Endothelial cell of umbilical vein (primary cell): ENCODE measurements at regions of chr1 and their contacts with region 1.

Region 1: DNA sequence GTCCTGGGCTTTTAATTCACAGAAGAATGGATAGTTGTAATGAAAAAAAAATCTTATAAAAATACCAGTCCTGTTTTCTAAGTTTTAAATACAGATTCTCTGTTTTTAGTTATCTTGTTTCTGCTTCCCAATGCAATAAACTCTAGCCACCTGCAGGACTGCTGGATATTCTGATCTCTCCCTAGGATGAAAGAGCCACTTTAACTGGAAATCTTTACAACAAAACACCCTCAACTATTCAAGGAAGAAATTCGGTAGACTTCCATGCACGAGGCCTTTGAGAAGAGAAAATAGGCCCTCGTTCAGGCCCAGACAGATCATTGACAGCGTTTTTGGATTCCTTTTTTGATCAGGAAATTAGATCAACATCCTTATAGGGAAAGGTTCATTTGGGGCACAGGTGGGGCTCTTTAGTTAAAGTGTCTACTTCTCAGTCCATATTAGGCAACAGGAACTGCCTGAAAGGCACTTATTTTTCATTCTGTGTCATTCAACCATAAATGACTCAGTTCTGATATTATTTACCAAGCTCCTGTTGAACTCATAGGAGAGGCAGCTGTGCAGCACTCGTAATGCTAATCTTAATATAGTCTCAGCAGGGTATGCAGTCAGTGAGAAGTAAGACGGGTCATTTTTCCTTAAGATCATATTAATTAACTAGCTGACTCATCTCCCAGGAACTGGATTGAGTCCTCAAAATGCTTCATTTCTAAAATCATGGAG is 71.1 kb upstream of the ERRFI1 start:
- DNase-seq: peak; percentile 94
- H3K4me3 ChIP-seq: peak overlapping the region in 1 of 3 experiments; percentile 20
- H3K27ac ChIP-seq: peak overlapping the region; percentile 98
- H3K4me1 ChIP-seq: peaks cover 49% of the 10 kb centered on the region
- H3K27me3 ChIP-seq: no peaks in the 10 kb centered on the region
- CTCF ChIP-seq: no peak
- POLR2A ChIP-seq: no peak

Region 2: GRCh38 chr1:8026153-8026975 is 70.9 kb before region 1 on chr1 and contains the start of gene ERRFI1:
- CTCF ChIA-PET with region 1: interaction called, 9 read pairs
- POLR2A ChIA-PET with region 1: no interaction called
- dilution Hi-C with region 1: no loop called
- intact Hi-C with region 1: loop called (anchors 1 kb)
- DNase-seq: peak; percentile 94
- H3K4me3 ChIP-seq: peak within 1 kb of the TSS; percentile 81 to 98 (median 94)
- H3K27ac ChIP-seq: peak within 1 kb of the TSS; percentile 63
- H3K4me1 ChIP-seq: peaks cover 57% of the 10 kb centered on the region
- H3K27me3 ChIP-seq: no peaks in the 10 kb centered on the region
- CTCF ChIP-seq: no peak
- POLR2A ChIP-seq: peak; percentile 99
- total RNA-seq, gene ERRFI1: 28.1 and 31.2 TPM in 2 replicates

Region 3: DNA sequence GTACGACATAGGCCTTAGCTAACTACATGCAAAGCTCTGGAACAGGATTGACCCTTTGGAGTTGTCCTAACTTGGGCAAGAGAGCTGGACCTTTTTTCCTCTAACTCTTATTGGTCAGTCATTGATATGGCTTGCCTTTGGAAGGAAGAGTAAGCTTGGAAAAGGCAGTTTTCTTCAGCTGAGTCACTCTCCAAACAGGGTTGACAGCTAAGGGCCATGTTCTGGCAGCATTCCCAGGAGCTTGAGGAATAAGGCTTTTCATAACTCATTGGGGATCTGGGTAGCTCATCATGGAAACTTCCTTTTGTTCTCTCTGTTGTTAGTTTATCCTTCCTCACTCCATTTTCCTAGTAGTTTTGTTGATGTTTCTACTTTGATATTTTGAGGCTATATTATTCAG is 56.7 kb before region 1 on chr1:
- CTCF ChIA-PET with region 1: interaction called, 4 read pairs
- POLR2A ChIA-PET with region 1: no interaction called
- dilution Hi-C with region 1: loop called (anchors 10 kb)
- intact Hi-C with region 1: no loop called
- DNase-seq: peak; percentile 98
- H3K4me3 ChIP-seq: no peak overlapping the region
- H3K27ac ChIP-seq: peak overlapping the region; percentile 58
- H3K4me1 ChIP-seq: peaks cover 15% of the 10 kb centered on the region
- H3K27me3 ChIP-seq: no peaks in the 10 kb centered on the region
- CTCF ChIP-seq: no peak
- POLR2A ChIP-seq: no peak

Region 4: GRCh38 chr1:8077120-8077573 is 20.1 kb before region 1 on chr1:
- CTCF ChIA-PET with region 1: no interaction called
- POLR2A ChIA-PET with region 1: interaction called, 5 read pairs
- dilution Hi-C with region 1: no loop called
- intact Hi-C with region 1: loop called (anchors 1 kb)
- DNase-seq: peak; percentile 94
- H3K4me3 ChIP-seq: no peak overlapping the region
- H3K27ac ChIP-seq: peak overlapping the region; percentile 76
- H3K4me1 ChIP-seq: peaks cover 22% of the 10 kb centered on the region
- H3K27me3 ChIP-seq: no peaks in the 10 kb centered on the region
- CTCF ChIP-seq: no peak
- POLR2A ChIP-seq: no peak

Region 5: GRCh38 chr1:8137481-8138244 is 40.4 kb after region 1 on chr1:
- CTCF ChIA-PET with region 1: interaction called, 6 read pairs
- POLR2A ChIA-PET with region 1: interaction called, 3 read pairs
- dilution Hi-C with region 1: no loop called
- intact Hi-C with region 1: loop called (anchors 1 kb)
- DNase-seq: peak; percentile 97
- H3K4me3 ChIP-seq: no peak overlapping the region
- H3K27ac ChIP-seq: peak overlapping the region; percentile 81
- H3K4me1 ChIP-seq: peaks cover 39% of the 10 kb centered on the region
- H3K27me3 ChIP-seq: no peaks in the 10 kb centered on the region
- CTCF ChIP-seq: no peak
- POLR2A ChIP-seq: no peak